AG04449 (cell line): ENCODE measurements at regions of chr7 and their contacts with region 1.

Region 1: GRCh38 chr7:24819916-24820689 is 62.8 kb upstream of the GSDME start:
- DNase-seq: no peak
- H3K4me3 ChIP-seq: no peak overlapping the region
- CTCF ChIP-seq: peak; percentile 84

Region 2: GRCh38 chr7:24836084-24836483 is 16.0 kb after region 1 on chr7:
- CTCF ChIA-PET with region 1: interaction called, 20 read pairs
- POLR2A ChIA-PET with region 1: interaction called, 3 read pairs
- DNase-seq: no peak
- H3K4me3 ChIP-seq: no peak overlapping the region
- CTCF ChIP-seq: no peak

Region 3: GRCh38 chr7:24971333-24972165 is 151.4 kb after region 1 on chr7:
- CTCF ChIA-PET with region 1: interaction called, 34 read pairs
- POLR2A ChIA-PET with region 1: interaction called, 3 read pairs
- DNase-seq: peak; percentile 63
- H3K4me3 ChIP-seq: no peak overlapping the region
- CTCF ChIP-seq: no peak

Region 4: GRCh38 chr7:25028370-25029021 is 208.4 kb after region 1 on chr7:
- CTCF ChIA-PET with region 1: interaction called, 21 read pairs
- POLR2A ChIA-PET with region 1: interaction called, 4 read pairs
- DNase-seq: peak; percentile 49
- H3K4me3 ChIP-seq: no peak overlapping the region
- CTCF ChIP-seq: no peak

Region 5: GRCh38 chr7:25075459-25075858 is 255.4 kb after region 1 on chr7:
- CTCF ChIA-PET with region 1: interaction called, 129 read pairs
- POLR2A ChIA-PET with region 1: interaction called, 9 read pairs
- DNase-seq: no peak
- H3K4me3 ChIP-seq: no peak overlapping the region
- CTCF ChIP-seq: no peak